GM18951 (cell line): ENCODE measurements at regions of chr5 and their contacts with region 1.

Region 1: GRCh38 chr5:112995764-112996618 is 19.4 kb downstream of the DCP2 start:
- POLR2A ChIP-seq: no peak

Region 2: GRCh38 chr5:112733586-112733985 is 262.4 kb before region 1 on chr5:
- in situ Hi-C with region 1: no loop called
- POLR2A ChIP-seq: no peak

Region 3: GRCh38 chr5:113202746-113203716 is 207.0 kb after region 1 on chr5:
- in situ Hi-C with region 1: no loop called
- POLR2A ChIP-seq: no peak

Region 4: GRCh38 chr5:113320273-113320780 is 324.3 kb after region 1 on chr5:
- in situ Hi-C with region 1: loop called (anchors 10 kb)
- POLR2A ChIP-seq: no peak

Region 5: DNA sequence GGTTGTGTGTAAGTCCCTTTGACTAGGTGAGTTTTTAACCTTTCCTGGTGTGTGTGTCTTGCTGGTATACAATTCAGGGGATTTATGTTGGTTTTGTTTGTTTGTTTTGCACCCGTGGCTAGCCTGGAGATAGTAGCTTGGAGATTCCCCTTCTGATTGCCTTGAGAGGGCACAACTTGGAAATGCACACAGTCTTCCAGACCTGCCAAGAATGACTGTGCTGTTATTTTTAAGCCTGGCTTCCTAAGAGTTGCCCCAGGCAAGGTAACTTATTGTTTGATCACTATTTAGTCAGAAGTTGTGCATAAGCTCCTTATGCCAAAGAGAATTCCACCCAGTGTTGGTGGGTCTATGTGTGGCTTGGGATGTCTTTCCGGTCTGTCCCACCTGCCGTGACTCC is 944.0 kb after region 1 on chr5:
- in situ Hi-C with region 1: no loop called
- POLR2A ChIP-seq: no peak